ENCODE measurements at regions of chr7 and their contacts with region 1.

Region 1: DNA sequence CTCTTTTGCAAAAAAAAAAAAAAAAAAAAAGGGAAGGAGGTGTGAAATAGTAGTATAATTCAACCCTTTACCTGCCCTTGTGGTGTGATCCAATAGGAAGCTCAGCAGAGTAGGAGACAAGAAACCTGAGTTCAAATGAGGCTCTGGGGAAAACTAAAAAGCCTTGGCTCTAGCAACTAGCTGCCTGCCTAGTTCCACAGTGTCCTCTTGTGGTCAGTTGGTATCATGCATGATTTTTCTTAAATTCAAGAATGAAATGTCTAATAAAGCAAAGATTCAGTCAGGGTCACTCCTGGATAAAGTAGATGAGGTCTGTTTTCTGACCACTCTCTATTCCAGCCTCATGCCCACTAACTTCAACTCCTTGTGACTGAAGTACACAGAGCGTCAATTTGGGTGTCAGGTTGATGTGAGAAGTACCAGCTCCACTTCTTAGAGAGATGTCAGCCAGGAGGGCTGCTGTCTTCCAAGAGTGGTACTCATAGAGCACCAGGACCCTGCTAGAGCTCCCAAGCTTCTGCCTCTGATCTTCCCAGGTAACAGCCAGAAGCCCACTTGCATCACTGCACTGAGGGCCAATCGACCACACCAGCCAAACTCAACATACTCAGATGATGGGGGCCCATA is 10.5 kb downstream of the LSM5 start:
- DNase-seq: peak; percentile 62 to 72
- ATAC-seq: peak; percentile 61 to 67
- H3K4me3 ChIP-seq: no peak overlapping the region
- H3K27ac ChIP-seq: no peak overlapping the region
- H3K4me1 ChIP-seq: no peaks in the 10 kb centered on the region
- CTCF ChIP-seq: peak; percentile 92
- EP300 ChIP-seq: no peak
- POLR2A ChIP-seq: no peak
- RAD21 ChIP-seq: peak; percentile 90 to 95

Region 2: DNA sequence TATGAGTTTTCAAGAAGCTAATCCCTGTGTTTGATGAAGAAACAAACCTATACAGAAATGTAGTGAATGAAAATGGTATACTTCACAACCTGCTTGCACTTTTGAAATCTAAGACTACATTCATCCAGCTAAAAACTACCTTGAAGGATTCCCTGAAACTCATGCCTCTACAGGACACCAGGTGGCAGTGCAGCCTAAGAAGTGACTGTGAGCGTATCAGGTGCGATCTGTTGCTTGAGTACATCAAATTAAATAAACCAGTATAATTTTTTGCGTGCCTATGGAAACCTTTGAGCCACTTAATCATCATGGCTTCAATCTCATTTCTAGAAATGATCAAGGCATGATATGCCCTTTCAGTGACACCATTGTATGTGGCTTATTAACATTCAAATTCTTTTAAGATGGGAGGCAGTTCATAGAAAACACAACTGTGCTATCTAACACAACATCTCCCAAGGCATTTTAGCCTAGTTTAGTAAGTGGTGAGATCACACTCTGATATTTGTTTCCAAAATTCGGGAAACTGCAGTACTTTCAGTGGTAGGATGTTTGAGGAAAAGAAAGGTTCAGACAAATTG is 735.3 kb before region 1 on chr7:
- CTCF ChIA-PET with region 1: interaction called, 10 read pairs
- POLR2A ChIA-PET with region 1: no interaction called
- DNase-seq: peak; percentile 44 to 82
- ATAC-seq: peak; percentile 77 to 93; a peak in 4 of 6 replicates
- H3K4me3 ChIP-seq: no peak overlapping the region
- H3K27ac ChIP-seq: peak overlapping the region in 1 of 2 experiments; percentile 11; a peak in 1 of 6 replicates
- H3K4me1 ChIP-seq: peaks cover 22% of the 10 kb centered on the region
- CTCF ChIP-seq: peak; percentile 96
- EP300 ChIP-seq: no peak
- POLR2A ChIP-seq: no peak
- RAD21 ChIP-seq: peak; percentile 99

Region 3: GRCh38 chr7:32126843-32127242 is 352.8 kb before region 1 on chr7:
- CTCF ChIA-PET with region 1: no interaction called
- POLR2A ChIA-PET with region 1: no interaction called
- DNase-seq: no peak
- ATAC-seq: no peak
- H3K4me3 ChIP-seq: no peak overlapping the region
- H3K27ac ChIP-seq: no peak overlapping the region
- H3K4me1 ChIP-seq: no peaks in the 10 kb centered on the region
- CTCF ChIP-seq: no peak
- EP300 ChIP-seq: no peak
- POLR2A ChIP-seq: no peak
- RAD21 ChIP-seq: no peak

Region 4: GRCh38 chr7:32216759-32217326 is 262.8 kb before region 1 on chr7:
- CTCF ChIA-PET with region 1: interaction called, 241 read pairs
- POLR2A ChIA-PET with region 1: interaction called, 6 read pairs
- DNase-seq: no peak
- ATAC-seq: no peak
- H3K4me3 ChIP-seq: no peak overlapping the region
- H3K27ac ChIP-seq: no peak overlapping the region
- H3K4me1 ChIP-seq: no peaks in the 10 kb centered on the region
- CTCF ChIP-seq: no peak
- EP300 ChIP-seq: no peak
- POLR2A ChIP-seq: no peak
- RAD21 ChIP-seq: no peak

Region 5: DNA sequence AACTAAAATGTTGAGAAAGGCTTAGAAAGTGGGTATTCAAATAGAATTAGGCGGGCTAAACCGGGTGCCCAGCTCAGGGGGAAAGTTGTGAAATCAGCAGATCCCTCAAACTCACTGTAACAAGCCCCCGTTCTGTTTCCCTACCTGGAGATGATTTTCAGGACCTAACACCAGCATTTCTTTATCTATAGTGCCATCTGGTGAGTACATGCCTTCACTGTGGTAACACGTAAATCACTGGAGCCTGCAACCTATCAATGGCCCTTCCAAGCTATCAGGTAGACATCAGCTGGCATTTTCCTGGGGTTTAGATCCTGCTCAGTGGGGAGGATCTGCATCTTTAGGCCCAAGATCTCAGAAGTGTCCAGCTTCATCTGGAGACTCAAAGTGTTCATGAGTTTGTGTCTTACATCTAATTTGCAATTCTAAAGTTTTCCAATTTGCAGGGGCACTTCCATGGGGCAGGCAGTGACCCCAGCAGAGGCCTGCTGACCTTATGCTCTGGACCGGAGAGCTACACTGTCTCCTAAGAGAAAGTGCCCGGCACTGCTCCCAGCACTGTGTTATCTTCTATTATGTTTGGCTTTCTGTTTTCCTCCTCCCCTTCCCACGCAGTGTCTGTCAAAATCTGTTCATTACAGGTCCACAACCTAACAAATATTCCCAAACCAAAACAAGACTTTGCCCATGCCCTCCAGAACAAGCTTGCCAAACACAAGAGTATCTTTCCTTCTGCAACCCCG is 122.0 kb before region 1 on chr7:
- CTCF ChIA-PET with region 1: interaction called, 10 read pairs
- POLR2A ChIA-PET with region 1: no interaction called
- DNase-seq: peak; percentile 22 to 25
- ATAC-seq: peak; percentile 72 to 73; a peak in 5 of 6 replicates
- H3K4me3 ChIP-seq: no peak overlapping the region
- H3K27ac ChIP-seq: no peak overlapping the region
- H3K4me1 ChIP-seq: no peaks in the 10 kb centered on the region
- CTCF ChIP-seq: peak; percentile 41
- EP300 ChIP-seq: no peak
- POLR2A ChIP-seq: no peak
- RAD21 ChIP-seq: peak; percentile 58 to 59

Region 6: DNA sequence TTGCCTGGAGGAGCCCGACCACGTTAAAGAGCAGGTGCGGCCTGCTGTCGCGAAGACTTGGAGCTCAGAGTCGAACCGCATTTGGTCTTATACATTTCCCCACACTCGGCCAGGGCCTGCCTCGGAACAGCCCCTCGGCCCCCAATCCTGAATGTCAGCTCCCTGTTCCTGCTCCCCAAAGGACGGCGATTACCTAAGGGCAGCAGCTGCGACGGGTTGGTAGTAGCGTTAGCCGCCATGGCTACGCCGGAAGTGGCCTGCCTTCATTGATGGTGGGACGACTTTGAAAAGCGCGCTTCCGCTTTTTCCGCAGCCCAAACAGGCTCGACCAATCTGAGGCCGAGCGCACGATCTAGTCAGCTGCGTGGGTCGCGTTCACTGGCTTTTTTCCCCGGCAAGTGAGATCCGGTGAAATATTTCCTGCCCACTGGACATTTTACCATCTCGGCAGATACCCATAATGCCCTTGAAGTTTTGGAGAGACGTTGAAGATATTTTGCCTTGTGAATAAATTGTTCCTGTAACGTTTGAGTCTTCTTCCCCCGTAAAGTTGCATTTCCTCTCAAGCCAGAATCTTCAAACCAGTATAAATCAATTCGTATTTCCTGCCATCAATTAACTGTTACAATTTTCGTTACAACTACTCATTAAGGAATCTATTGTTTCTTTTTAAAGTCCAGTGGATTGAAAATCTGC is 10.6 kb after region 1 on chr7 and contains the start of gene LSM5:
- CTCF ChIA-PET with region 1: interaction called, 15 read pairs
- POLR2A ChIA-PET with region 1: interaction called, 5 read pairs
- DNase-seq: peak; percentile 72 to 97
- ATAC-seq: peak; percentile 91 to 93
- H3K4me3 ChIP-seq: peak within 1 kb of the TSS; percentile 79
- H3K27ac ChIP-seq: peak within 1 kb of the TSS; percentile 90 to 91
- H3K4me1 ChIP-seq: peaks cover 21% of the 10 kb centered on the region
- CTCF ChIP-seq: no peak
- EP300 ChIP-seq: no peak
- POLR2A ChIP-seq: peak; percentile 75
- RAD21 ChIP-seq: no peak
- polyA plus RNA-seq, gene LSM5: 76.3 and 158 TPM in 2 replicates

Measured in A549 (cell line).